ENCODE measurements at regions of chr6 and their contacts with region 1.

Region 1: DNA sequence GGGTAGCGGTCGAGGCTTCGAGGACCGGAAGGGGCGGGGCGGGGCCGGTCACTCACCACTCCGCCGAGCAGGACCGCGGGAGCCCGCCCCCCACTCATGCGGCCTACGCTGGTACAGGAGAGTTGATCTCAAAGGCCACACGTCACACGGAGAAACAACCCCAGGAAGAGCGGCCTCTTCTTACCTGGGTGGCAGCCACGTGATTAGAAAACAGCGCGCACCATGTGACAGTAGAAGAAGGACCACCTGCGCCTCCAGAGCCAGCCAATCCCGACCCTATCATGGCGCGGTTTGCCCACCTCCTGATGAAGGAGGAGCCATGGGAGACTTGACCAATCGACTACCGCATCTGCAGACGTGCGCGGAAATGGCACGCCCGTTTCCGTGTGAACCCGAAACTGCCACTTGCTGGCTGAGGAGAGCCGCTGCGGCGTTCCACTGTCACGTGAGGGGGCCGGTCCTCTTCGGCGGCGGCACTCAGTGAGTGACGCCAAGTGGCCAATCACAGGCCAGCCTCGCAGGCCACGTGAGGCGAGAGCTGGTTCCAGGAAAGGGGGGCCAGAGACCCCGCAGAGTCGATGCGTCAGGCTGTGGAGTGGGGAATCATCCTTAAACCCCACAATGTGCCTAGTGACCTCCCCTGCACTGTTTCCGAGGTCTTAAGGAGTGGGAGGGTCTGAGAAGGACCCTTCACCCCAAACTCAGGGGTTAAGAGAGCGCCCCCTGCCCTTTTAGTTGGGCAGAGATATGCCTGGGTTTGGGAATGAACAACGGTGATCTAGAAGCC is at the start of gene CUTA:
- DNase-seq: peak; percentile 92
- ATAC-seq: peak; percentile 90
- H3K4me3 Mint-ChIP-seq: peak within 1 kb of the TSS; percentile 91
- H3K27ac Mint-ChIP-seq: peak within 1 kb of the TSS; percentile 96
- H3K4me1 Mint-ChIP-seq: peaks cover 66% of the 10 kb centered on the region
- H3K27me3 Mint-ChIP-seq: no peaks in the 10 kb centered on the region
- CTCF ChIP-seq: no peak
- total RNA-seq, gene CUTA: 111 and 120 TPM in 2 replicates

Region 2: DNA sequence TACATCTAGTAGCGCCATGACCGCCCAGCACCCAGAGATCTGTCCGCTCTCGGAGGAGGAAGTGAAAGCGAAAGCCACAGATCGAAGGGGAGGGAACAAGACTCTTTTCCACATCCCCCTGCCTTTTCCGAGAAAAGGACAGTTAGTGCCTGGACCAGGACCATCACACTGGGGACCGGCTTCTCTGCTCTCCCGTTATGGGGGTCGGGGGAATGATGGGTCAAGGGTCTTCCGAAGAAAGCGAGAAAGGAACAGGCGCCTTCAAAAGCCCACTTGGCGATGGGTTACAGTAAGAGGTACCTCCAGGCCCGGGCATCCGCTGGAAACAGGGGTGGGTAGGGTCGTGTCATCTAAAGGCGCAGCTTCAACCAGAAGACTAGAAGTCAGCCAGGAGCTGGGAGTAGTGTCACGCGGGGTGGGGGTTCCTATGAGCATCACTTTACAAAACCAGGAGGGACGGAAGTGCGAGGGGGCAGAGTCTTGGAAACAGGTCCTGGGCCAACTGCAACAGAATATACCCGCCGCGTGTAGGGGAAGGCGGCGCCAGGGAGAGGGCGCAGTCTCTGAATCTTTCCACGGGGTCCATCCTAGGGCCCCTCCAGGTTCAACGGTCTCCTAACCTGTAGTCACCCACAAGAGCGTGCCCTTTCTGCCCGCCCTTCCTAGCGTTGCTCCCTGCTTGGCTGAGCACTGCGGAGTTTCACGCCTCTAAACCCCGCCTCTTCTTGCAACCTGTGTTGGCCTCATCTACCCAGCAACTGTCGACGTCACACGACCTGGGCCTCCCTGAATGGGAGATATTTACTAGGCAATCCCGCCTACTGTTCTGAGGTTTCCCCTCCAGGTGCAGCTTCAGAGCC is 573.9 kb before region 1 on chr6 and contains the start of gene PSMB8:
- CTCF ChIA-PET with region 1: no interaction called
- POLR2A ChIA-PET with region 1: no interaction called
- intact Hi-C with region 1: loop called (anchors 5 kb)
- DNase-seq: peak; percentile 96
- ATAC-seq: peak; percentile 78
- H3K4me3 Mint-ChIP-seq: peak within 1 kb of the TSS; percentile 99
- H3K27ac Mint-ChIP-seq: peak within 1 kb of the TSS; percentile 100
- H3K4me1 Mint-ChIP-seq: peaks cover 92% of the 10 kb centered on the region
- H3K27me3 Mint-ChIP-seq: no peaks in the 10 kb centered on the region
- CTCF ChIP-seq: no peak
- total RNA-seq, gene PSMB8: 182 and 194 TPM in 2 replicates

Region 3: GRCh38 chr6:33008944-33009861 is 408.9 kb before region 1 on chr6 and contains the start of gene HLA-DOA:
- CTCF ChIA-PET with region 1: no interaction called
- POLR2A ChIA-PET with region 1: no interaction called
- intact Hi-C with region 1: loop called (anchors 10 kb)
- DNase-seq: peak; percentile 61
- ATAC-seq: peak; percentile 95
- H3K4me3 Mint-ChIP-seq: peak within 1 kb of the TSS; percentile 98
- H3K27ac Mint-ChIP-seq: peak within 1 kb of the TSS; percentile 95
- H3K4me1 Mint-ChIP-seq: peaks cover 57% of the 10 kb centered on the region
- H3K27me3 Mint-ChIP-seq: no peaks in the 10 kb centered on the region
- CTCF ChIP-seq: no peak
- total RNA-seq, gene HLA-DOA: 153 and 167 TPM in 2 replicates

Region 4: GRCh38 chr6:33276864-33277662 is 141.0 kb before region 1 on chr6 and contains the start of gene B3GALT4:
- CTCF ChIA-PET with region 1: no interaction called
- POLR2A ChIA-PET with region 1: interaction called, 13 read pairs
- intact Hi-C with region 1: no loop called
- DNase-seq: peak; percentile 77
- ATAC-seq: peak; percentile 68
- H3K4me3 Mint-ChIP-seq: peak within 1 kb of the TSS; percentile 92
- H3K27ac Mint-ChIP-seq: peak within 1 kb of the TSS; percentile 100
- H3K4me1 Mint-ChIP-seq: peaks cover 62% of the 10 kb centered on the region
- H3K27me3 Mint-ChIP-seq: no peaks in the 10 kb centered on the region
- CTCF ChIP-seq: no peak
- total RNA-seq, gene B3GALT4: 19.1 and 19.4 TPM in 2 replicates

Region 5: DNA sequence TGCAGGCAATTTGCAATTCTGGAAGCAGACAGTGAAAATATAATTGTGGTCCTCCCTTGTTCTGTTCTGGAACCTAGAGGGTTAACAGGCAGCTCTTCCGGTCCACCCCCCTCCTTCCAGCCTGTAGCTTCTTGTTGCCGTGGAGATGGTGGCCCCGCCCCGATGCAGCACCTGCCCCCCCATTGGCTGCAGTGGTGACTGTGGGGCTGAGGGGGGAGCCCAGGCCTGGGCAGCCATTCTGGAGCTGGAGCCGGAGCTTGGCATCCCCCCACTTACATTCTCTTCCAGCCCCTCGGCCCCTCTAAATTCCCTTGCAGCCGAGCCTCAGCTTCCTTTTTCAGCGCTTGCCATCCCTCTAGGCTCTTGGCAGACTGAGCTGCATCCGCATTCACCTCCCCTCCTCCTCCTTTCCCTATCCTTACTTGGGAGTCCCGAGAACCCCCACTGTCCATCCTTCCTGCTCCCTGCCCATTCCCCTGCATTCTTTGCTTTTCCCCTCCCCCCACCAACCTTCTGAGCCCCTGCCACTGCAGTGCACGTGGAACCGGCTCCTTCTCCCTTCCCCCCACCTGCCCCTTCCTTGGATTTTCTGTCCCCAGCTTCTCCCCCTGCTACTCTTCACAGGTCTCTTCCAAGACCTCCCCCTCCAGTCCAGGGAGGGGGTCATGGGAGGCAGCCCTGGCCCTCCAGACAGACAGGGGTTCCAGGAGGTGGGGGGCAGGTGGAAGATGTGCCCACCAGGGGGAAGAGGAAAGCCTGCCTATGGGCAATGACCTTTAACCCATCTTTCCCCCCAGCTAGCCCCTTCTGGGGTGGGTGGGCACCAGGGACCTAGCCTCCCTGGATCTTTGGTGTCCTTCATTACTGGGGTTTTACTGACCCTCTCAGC is 13.1 kb after region 1 on chr6:
- CTCF ChIA-PET with region 1: interaction called, 9 read pairs
- POLR2A ChIA-PET with region 1: interaction called, 31 read pairs
- intact Hi-C with region 1: loop called (anchors 1 kb)
- DNase-seq: peak; percentile 69
- ATAC-seq: peak; percentile 56
- H3K4me3 Mint-ChIP-seq: peak overlapping the region; percentile 67
- H3K27ac Mint-ChIP-seq: peak overlapping the region; percentile 60
- H3K4me1 Mint-ChIP-seq: peaks cover 78% of the 10 kb centered on the region
- H3K27me3 Mint-ChIP-seq: no peaks in the 10 kb centered on the region
- CTCF ChIP-seq: no peak